GM12878 (cell line): ENCODE measurements at regions of chr3 and their contacts with region 1.

Region 1: DNA sequence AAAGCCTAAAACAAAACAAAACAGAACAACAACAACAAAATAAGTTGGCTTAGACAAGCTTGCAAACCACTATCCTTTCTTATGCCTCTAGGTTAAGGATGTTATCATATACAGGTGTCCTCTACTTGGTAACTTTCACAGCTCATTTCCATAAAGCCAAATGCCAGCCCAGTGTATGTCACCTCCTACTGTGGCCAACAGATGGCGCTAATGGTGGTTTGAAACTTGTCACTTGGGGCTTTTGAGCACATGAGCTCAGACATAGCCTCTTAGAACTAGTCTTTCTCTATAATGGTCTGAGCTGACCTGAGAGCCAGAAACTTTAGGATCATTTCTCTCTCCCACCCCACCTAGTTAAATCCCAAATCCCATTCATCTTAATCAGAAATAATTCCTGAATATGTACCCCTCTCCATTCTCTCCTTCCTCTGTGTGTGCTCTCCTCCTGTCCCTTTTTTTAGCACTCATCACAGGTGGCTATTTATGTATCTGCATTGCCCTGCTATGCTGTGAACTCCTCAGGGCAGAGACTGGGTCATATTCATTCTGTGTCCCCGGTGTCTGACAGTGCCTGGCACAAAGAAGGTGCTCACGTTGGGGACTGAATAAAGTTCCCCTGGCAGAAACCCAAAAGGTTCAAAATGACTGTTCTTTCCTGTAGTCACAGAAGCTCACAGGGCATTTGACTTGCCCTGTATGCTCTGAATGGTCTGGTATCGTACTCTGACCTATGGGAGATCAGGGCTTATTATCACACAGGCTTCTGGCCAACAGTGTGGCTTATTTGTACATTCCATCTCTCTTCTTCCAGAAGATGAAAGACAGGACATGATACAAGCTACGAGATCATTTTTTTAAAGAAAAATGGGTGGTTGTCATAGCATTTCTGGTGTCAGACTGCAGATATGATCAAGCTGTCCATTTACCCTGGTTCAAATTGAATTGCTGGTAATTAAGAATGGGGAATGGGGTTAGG is 319.3 kb upstream of the AZI2 start:
- DNase-seq: peak; percentile 61
- ATAC-seq: peak; percentile 94
- H3K4me3 ChIP-seq: no peak overlapping the region
- H3K27ac ChIP-seq: no peak overlapping the region
- H3K4me1 ChIP-seq: peaks cover 6% of the 10 kb centered on the region; the same call in 1 of the 2 replicates
- H3K27me3 ChIP-seq: no peaks in the 10 kb centered on the region
- CTCF ChIP-seq: peak; percentile 66 to 81 (median 79)
- EP300 ChIP-seq: no peak
- POLR2A ChIP-seq: no peak
- RAD21 ChIP-seq: peak; percentile 65

Region 2: GRCh38 chr3:28651159-28651558 is 16.8 kb before region 1 on chr3:
- CTCF ChIA-PET with region 1: interaction called, 13 read pairs
- POLR2A ChIA-PET with region 1: no interaction called
- RAD21 ChIA-PET with region 1: no interaction called
- SMC1A ChIA-PET with region 1: interaction called, 4 read pairs
- in situ Hi-C with region 1: no loop called
- intact Hi-C with region 1: no loop called
- DNase-seq: no peak
- ATAC-seq: no peak
- H3K4me3 ChIP-seq: no peak overlapping the region
- H3K27ac ChIP-seq: no peak overlapping the region
- H3K4me1 ChIP-seq: no peaks in the 10 kb centered on the region
- H3K27me3 ChIP-seq: no peaks in the 10 kb centered on the region
- CTCF ChIP-seq: no peak
- EP300 ChIP-seq: no peak
- POLR2A ChIP-seq: no peak
- RAD21 ChIP-seq: no peak

Region 3: GRCh38 chr3:28726840-28727239 is 58.9 kb after region 1 on chr3:
- CTCF ChIA-PET with region 1: interaction called, 40 read pairs
- POLR2A ChIA-PET with region 1: no interaction called
- RAD21 ChIA-PET with region 1: interaction called, 20 read pairs
- SMC1A ChIA-PET with region 1: interaction called, 18 read pairs
- in situ Hi-C with region 1: no loop called
- intact Hi-C with region 1: loop called (anchors 5 kb)
- DNase-seq: peak; percentile 8
- ATAC-seq: peak; percentile 95
- H3K4me3 ChIP-seq: no peak overlapping the region
- H3K27ac ChIP-seq: no peak overlapping the region
- H3K4me1 ChIP-seq: no peaks in the 10 kb centered on the region
- H3K27me3 ChIP-seq: no peaks in the 10 kb centered on the region
- CTCF ChIP-seq: peak; percentile 46 to 61 (median 58)
- EP300 ChIP-seq: no peak
- POLR2A ChIP-seq: no peak
- RAD21 ChIP-seq: peak; percentile 51